Left colon (tissue), 2 donors: ENCODE measurements at regions of chr6 and their contacts with region 1.

Region 1: GRCh38 chr6:36759148-36759759 is 61.6 kb downstream of the RAB44 start:
- DNase-seq: peak; percentile 74 to 85
- ATAC-seq: peak; percentile 72

Region 2: GRCh38 chr6:36615018-36615761 is 144.1 kb before region 1 on chr6:
- intact Hi-C with region 1: loop called (anchors 5 to 10 kb)
- DNase-seq: peak; percentile 36 to 37
- ATAC-seq: peak; percentile 45

Region 3: GRCh38 chr6:36623547-36624459 is 135.5 kb before region 1 on chr6:
- intact Hi-C with region 1: loop called (anchors 5 to 10 kb)
- DNase-seq: peak; percentile 90
- ATAC-seq: peak; percentile 84

Region 4: GRCh38 chr6:36885461-36886401 is 126.5 kb after region 1 on chr6 and contains the start of gene C6orf89:
- intact Hi-C with region 1: no loop called
- DNase-seq: peak; percentile 98 to 99
- ATAC-seq: peak; percentile 100
- total RNA-seq, gene C6orf89: 53.9 to 59.3 TPM